ENCODE measurements at regions of chr7 and their contacts with region 1.

Region 1: GRCh38 chr7:107168233-107169119 is at the start of gene HBP1:
- DNase-seq: peak; percentile 100
- H3K4me3 Mint-ChIP-seq: peak within 1 kb of the TSS; percentile 93
- H3K27ac Mint-ChIP-seq: peak within 1 kb of the TSS; percentile 100
- H3K4me1 Mint-ChIP-seq: peaks cover 10% of the 10 kb centered on the region
- H3K27me3 Mint-ChIP-seq: no peaks in the 10 kb centered on the region
- CTCF ChIP-seq: no peak
- total RNA-seq, gene HBP1: 30.2 and 37.0 TPM in 2 replicates

Region 2: DNA sequence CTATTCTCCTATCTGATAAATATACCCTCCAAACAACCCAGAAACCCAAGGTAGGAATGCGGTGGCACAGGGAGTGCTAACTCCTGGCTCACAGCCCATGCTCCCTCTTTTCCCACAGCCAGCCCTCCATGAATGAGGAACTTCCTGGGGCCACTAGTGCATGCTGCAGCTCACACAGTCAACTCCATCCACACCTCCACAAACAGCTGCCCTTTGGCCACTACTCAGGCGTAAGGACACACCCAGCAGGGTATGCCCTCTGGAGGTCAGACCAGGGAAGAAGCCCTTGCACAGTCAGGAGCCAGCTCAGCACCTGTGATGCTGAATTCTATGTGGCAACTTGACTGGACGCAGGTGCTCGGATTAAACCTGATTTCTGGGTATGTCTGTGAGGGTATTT is 388.6 kb before region 1 on chr7:
- CTCF ChIA-PET with region 1: no interaction called
- POLR2A ChIA-PET with region 1: interaction called, 11 read pairs
- intact Hi-C with region 1: no loop called
- DNase-seq: peak; percentile 35
- H3K4me3 Mint-ChIP-seq: no peak overlapping the region
- H3K27ac Mint-ChIP-seq: no peak overlapping the region
- H3K4me1 Mint-ChIP-seq: peaks cover 16% of the 10 kb centered on the region
- H3K27me3 Mint-ChIP-seq: no peaks in the 10 kb centered on the region
- CTCF ChIP-seq: no peak

Region 3: DNA sequence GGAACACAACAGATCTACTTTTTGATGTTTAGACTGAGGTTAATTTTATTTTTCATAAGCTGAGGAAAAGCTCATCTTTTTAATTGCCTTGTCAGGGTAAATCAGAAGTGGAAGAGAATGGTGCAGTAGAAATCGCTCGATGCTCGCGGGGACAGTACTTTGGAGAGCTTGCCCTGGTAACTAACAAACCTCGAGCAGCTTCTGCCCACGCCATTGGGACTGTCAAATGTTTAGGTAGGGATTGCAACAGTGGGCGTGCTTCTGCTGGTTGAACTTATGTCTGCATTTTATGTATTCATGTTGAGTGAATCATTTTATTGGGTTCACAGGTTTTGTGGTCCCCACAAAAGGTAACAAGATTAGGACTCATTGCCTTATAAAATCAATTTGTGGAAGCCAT is 11.4 kb before region 1 on chr7:
- CTCF ChIA-PET with region 1: interaction called, 99 read pairs
- POLR2A ChIA-PET with region 1: interaction called, 113 read pairs
- intact Hi-C with region 1: no loop called
- DNase-seq: peak; percentile 9
- H3K4me3 Mint-ChIP-seq: no peak overlapping the region
- H3K27ac Mint-ChIP-seq: no peak overlapping the region
- H3K4me1 Mint-ChIP-seq: peaks cover 3% of the 10 kb centered on the region
- H3K27me3 Mint-ChIP-seq: no peaks in the 10 kb centered on the region
- CTCF ChIP-seq: no peak

Region 4: DNA sequence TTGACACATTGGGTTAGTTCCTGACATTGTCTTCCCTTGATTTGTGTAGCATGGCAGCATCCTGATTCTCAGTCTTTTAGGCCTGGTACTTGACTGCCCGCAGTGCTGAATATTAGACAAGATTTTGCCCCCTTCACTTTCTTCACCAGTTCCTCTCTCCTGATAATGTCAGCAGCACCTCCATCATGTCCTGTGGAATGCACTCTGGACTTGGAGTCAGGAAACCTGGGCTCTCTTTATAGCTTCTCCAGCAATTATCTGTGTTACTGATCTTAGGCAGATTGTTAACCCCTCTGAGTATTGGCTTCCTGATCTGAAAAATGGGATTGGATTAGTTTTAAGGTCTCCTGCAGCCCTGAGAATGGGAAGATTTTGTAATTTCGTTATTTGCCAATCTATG is 19.3 kb after region 1 on chr7:
- CTCF ChIA-PET with region 1: no interaction called
- POLR2A ChIA-PET with region 1: interaction called, 126 read pairs
- intact Hi-C with region 1: no loop called
- DNase-seq: no peak
- H3K4me3 Mint-ChIP-seq: no peak overlapping the region
- H3K27ac Mint-ChIP-seq: no peak overlapping the region
- H3K4me1 Mint-ChIP-seq: peaks cover 13% of the 10 kb centered on the region
- H3K27me3 Mint-ChIP-seq: no peaks in the 10 kb centered on the region
- CTCF ChIP-seq: no peak

Region 5: GRCh38 chr7:107743567-107744344 is 575.3 kb after region 1 on chr7 and contains the start of gene CBLL1:
- CTCF ChIA-PET with region 1: no interaction called
- POLR2A ChIA-PET with region 1: interaction called, 36 read pairs
- intact Hi-C with region 1: no loop called
- DNase-seq: peak; percentile 92
- H3K4me3 Mint-ChIP-seq: peak within 1 kb of the TSS; percentile 94
- H3K27ac Mint-ChIP-seq: peak within 1 kb of the TSS; percentile 97
- H3K4me1 Mint-ChIP-seq: peaks cover 21% of the 10 kb centered on the region
- H3K27me3 Mint-ChIP-seq: no peaks in the 10 kb centered on the region
- CTCF ChIP-seq: peak; percentile 58
- total RNA-seq, gene CBLL1: 34.5 and 39.7 TPM in 2 replicates